ENCODE measurements at regions of chr1 and their contacts with region 1.

Region 1: DNA sequence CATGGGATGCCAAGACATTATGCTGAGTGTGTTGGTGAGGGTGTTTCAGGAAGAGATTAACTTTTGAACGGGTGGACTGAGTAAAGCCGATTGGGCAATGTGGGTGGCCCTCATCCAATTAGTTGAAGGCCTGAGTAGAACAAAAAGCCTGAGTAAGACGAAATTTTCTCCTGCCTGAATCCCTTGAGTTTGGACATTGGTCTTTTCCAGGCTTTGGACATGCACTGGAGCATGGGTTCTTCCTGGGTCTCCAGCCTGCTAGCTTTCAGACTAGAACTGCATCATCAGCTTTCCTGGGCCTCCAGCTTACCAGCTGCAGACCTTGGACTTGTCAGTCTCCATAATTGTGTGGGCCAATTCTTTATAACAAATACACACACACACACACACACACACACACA is 63.6 kb downstream of the NIBAN1 start:
- DNase-seq: no peak

Region 2: DNA sequence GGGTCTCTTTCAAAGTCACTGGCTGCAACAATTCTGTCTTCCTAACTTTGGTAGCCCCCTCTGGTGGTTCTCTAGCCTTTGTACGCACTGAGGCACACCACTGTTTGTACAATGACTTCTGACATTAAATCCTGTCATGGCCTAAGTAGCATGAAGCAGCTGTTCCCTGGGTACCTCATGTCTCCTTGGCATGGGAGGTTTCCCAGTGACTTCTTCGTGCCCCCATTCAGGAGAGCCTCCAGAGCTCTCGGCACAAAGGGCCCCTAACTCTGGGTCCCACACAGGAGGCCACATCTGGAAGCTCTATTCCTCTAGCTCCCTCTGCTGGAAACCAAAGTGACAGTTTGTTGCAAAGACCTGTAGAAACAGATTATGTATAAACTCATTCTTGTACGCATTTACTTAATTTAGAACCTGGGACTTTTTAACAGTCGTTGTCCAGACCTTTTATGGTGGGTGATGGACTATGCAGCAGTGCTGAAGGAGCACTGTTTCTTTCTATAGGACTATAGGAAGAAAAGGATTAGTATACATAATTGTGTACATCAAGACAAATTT is 259.7 kb after region 1 on chr1:
- CTCF ChIA-PET with region 1: interaction called, 11 read pairs
- POLR2A ChIA-PET with region 1: no interaction called
- DNase-seq: peak; percentile 72

Measured in HEK293T (cell line).